Activated CD8-positive, alpha-beta T cell treated with anti-CD3 and anti-CD28 coated beads, Interleukin-2, amount 10 ng/mL, durations not matched to agents 7 days and 5 days (primary cell): ENCODE measurements at regions of chr15 and their contacts with region 1.

Region 1: DNA sequence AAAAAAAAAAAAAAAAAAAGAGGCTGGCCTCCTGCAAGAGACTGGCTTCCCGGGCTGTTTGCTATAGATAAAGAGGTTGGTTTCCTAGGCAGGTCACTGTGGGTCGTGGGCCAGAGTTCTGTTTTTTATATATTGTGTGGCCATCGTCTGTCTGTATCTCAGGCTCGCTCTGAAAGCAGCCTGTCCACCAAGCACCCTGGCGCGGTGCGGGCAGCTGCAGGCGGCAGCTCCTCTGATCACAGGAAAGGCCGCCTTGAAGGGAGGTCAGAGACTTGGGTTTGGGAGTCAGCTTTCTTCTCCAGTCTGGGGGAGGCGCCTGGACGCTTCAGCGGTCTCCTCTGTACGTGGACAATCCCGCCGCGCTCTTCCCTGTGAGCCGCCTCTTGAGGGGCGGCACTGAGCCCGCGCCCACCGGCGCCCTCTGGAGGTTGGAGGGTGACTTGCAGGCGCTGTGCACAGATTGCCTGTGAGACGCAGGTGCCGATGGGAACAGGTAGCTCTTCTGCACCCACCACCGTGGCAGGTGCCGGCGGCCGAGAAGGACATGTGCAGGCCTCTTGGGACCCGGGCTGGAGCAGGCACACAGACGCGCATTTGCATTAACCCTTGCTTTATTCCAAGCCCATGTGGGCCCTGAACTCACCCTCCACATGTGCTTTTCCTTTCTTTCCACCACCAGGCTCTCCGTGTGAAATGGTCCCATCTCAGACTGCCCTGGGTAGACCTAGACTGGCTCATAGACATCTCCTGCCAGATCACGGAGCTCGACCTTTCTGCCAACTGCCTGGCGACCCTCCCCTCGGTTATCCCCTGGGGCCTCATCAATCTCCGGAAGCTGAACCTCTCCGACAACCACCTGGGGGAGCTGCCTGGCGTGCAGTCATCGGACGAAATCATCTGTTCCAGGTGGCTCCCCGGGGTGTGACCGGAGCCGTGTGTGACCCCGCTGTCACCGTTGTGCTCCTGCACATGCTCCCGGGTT is 89.3 kb downstream of the LRRK1 start:
- DNase-seq: peak; percentile 90
- ATAC-seq: peak; percentile 94
- H3K4me3 Mint-ChIP-seq: peak overlapping the region; percentile 86
- H3K27ac Mint-ChIP-seq: no peak overlapping the region
- H3K4me1 Mint-ChIP-seq: peaks cover 19% of the 10 kb centered on the region
- H3K27me3 Mint-ChIP-seq: peaks cover 21% of the 10 kb centered on the region

Region 2: GRCh38 chr15:100918034-100918689 is 90.3 kb before region 1 on chr15:
- CTCF ChIA-PET with region 1: interaction called, 222 read pairs
- POLR2A ChIA-PET with region 1: interaction called, 4 read pairs
- DNase-seq: peak; percentile 76
- ATAC-seq: peak; percentile 95
- H3K4me3 Mint-ChIP-seq: peak overlapping the region; percentile 70
- H3K27ac Mint-ChIP-seq: no peak overlapping the region
- H3K4me1 Mint-ChIP-seq: peaks cover 22% of the 10 kb centered on the region
- H3K27me3 Mint-ChIP-seq: peaks cover 66% of the 10 kb centered on the region

Region 3: GRCh38 chr15:100987143-100987542 is 21.3 kb before region 1 on chr15:
- CTCF ChIA-PET with region 1: interaction called, 11 read pairs
- POLR2A ChIA-PET with region 1: no interaction called
- DNase-seq: no peak
- ATAC-seq: no peak
- H3K4me3 Mint-ChIP-seq: no peak overlapping the region
- H3K27ac Mint-ChIP-seq: no peak overlapping the region
- H3K4me1 Mint-ChIP-seq: no peaks in the 10 kb centered on the region
- H3K27me3 Mint-ChIP-seq: peaks cover 33% of the 10 kb centered on the region

Region 4: GRCh38 chr15:101049856-101050622 is 41.6 kb after region 1 on chr15:
- CTCF ChIA-PET with region 1: no interaction called
- POLR2A ChIA-PET with region 1: no interaction called
- DNase-seq: no peak
- ATAC-seq: no peak
- H3K4me3 Mint-ChIP-seq: no peak overlapping the region
- H3K27ac Mint-ChIP-seq: no peak overlapping the region
- H3K4me1 Mint-ChIP-seq: no peaks in the 10 kb centered on the region
- H3K27me3 Mint-ChIP-seq: no peaks in the 10 kb centered on the region

Region 5: DNA sequence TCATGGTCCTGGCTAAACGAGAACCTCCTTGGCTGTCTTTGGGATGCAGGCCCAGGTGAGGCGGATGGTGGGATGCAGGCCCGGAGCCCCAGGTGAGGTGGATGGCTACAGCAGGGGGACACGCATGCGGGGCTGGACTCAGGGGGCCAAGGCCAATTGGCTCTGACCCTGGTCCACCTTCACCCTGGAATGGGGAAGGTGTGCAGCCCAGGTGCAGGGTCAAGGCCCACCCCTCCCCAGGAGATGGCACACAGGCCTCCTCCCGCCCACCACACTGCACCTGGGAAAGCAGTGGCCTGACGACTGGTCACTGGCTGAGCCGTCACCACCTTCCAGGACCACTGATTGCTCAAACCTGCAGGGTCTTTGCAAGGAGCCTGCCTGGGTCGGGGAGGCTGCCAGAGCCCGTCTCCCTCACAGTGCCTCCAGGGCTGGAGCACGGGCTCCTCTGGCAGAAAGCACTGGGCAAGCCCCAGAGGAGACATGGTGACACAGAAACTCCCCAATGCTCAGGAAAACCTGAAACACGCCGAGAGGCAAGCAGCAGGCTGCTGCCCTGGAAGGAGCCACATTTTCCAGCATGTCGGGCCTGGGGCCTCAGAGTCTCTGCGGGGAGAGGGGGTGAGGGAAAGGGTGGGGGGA is 70.4 kb after region 1 on chr15:
- CTCF ChIA-PET with region 1: no interaction called
- POLR2A ChIA-PET with region 1: no interaction called
- DNase-seq: no peak
- ATAC-seq: no peak
- H3K4me3 Mint-ChIP-seq: no peak overlapping the region
- H3K27ac Mint-ChIP-seq: no peak overlapping the region
- H3K4me1 Mint-ChIP-seq: no peaks in the 10 kb centered on the region
- H3K27me3 Mint-ChIP-seq: peaks cover 4% of the 10 kb centered on the region

Region 6: DNA sequence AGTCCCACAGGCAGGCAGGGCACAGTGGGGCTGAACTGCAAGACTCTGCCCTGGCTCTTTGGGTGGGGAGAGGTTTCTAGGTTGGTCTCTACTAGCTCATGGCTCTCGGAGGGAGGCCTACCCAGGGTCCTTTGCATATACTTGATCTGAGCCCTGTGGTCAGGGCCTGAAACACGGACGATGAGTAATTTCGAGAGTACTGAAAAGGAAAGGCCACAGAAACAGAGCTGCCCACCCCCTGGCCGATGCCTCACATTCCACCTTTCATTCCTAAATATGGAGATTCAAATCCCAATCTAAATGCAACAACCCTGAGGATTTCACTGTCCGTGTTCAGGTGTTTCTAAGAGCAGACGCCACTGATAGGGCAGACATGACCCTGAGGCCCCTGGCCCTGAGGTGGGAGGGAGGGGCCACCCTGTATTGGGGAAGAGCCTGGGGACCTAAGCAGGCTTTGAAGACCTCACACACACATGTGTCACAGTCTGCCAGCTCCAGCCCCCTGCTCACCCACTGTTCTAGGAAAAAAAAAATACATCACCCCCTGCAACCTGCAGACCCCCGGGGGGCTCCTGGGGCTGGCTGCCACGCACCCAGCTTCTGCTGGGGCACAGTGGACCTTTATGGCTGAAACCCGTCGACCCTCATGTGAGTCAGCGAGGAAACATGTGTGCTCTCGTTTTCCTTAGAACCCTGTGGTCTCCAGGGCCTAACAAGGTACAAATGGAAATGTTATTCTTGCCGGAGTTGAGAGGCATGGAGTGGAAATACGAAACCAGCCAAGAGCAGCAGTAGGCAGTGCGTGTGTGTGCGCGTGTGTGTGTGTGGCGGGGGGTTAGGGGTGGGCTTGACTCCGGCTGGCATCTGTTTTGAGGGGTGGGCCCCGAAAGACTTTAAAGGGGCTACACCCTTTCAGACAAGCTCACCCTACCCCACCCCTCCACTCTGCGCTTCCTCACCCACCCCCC is 130.7 kb after region 1 on chr15:
- CTCF ChIA-PET with region 1: no interaction called
- POLR2A ChIA-PET with region 1: no interaction called
- DNase-seq: no peak
- ATAC-seq: no peak
- H3K4me3 Mint-ChIP-seq: no peak overlapping the region
- H3K27ac Mint-ChIP-seq: peak overlapping the region; percentile 44
- H3K4me1 Mint-ChIP-seq: peaks cover 40% of the 10 kb centered on the region
- H3K27me3 Mint-ChIP-seq: no peaks in the 10 kb centered on the region

Region 7: DNA sequence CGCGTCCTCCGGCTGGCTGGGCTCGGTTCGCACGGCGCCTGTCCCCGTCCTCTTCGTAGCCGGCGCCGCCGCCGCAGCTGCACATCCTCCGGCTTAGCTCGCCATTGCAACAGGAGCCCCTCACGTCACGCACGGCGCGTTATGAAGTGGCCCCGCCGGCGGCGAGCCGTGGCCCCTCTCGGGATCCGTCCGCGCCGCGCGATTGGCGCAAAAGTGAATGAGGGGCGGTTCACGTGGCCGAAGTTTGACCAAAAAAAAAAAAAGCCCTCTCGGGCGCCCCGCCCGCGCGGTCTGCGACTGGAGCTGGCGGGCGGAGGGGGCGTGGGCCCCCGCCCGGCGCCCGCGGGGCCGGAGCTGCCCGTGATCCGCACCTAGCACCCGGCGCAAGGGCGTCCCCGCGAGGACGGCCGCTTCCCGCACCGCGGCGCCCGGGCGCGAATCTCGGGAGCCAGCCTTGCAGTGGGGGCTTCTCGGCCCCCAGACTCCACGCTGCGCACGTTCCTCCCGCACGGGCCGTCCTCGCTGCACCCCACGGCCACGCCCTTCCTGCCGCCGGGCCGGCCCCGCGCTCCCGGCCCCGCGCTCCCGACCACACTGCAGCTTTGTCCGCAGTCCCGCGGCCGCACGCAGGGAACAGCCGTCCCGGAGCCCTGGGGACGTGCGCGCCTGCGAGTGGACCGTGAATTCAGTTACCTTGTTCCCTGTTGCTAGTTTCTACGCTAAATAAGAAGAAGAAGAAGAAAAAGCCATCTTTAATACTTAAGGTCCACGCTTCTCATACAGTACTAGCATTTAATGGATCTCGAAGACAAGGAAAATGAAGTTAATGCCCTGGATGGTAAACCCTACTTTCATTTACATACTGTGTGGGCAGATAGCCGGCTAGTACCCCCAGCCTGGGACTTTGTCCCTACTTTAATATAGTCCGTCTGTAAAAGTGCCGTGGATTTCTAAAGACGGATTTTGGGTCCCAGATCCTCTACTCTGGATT is 243.7 kb after region 1 on chr15 and contains the start of gene CHSY1:
- CTCF ChIA-PET with region 1: interaction called, 235 read pairs
- POLR2A ChIA-PET with region 1: no interaction called
- DNase-seq: peak; percentile 92
- ATAC-seq: peak; percentile 76
- H3K4me3 Mint-ChIP-seq: peak within 1 kb of the TSS; percentile 92
- H3K27ac Mint-ChIP-seq: peak within 1 kb of the TSS; percentile 92
- H3K4me1 Mint-ChIP-seq: peaks cover 71% of the 10 kb centered on the region
- H3K27me3 Mint-ChIP-seq: no peaks in the 10 kb centered on the region
- total RNA-seq, gene CHSY1: 44.6 to 46.4 TPM

Region 8: DNA sequence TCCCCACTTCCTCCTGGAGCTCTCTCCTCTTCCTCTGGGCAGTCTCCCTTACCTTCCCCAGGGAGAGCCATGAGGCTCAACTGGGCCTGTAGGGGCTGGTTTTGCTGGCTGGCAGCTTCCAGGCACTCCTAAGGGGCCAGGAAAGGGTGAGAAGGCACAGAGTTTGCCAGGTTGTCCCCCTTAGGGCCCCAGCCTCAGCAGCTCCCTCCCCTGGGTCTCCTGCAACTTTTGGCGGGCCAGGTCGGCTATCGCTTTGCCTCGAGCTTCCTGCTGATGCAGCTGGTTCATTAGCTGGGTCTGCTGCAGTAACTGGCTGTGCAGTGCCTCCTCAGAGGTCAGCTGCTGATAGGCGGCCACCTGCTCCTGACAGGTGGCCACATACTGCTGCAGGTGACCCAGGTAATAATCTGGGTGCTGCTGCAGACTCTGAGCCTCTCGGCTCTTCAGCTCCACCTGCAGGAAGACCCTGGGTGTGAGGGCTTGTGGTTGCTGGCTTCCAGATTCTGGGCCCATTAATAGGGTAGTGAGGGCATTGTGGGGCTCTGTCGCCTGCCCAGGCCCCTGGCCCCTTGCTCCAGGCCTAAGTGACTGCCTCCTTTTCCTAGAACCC is 765.2 kb after region 1 on chr15:
- CTCF ChIA-PET with region 1: no interaction called
- POLR2A ChIA-PET with region 1: no interaction called
- DNase-seq: no peak
- ATAC-seq: no peak
- H3K4me3 Mint-ChIP-seq: no peak overlapping the region
- H3K27ac Mint-ChIP-seq: no peak overlapping the region
- H3K4me1 Mint-ChIP-seq: no peaks in the 10 kb centered on the region
- H3K27me3 Mint-ChIP-seq: no peaks in the 10 kb centered on the region